Right ventricle myocardium inferior (tissue), 1 donor: ENCODE measurements at regions of chr9 and their contacts with region 1.

Region 1: GRCh38 chr9:12719431-12719830 is 26.2 kb downstream of the TYRP1 start:
- DNase-seq: no peak
- ATAC-seq: no peak

Region 2: DNA sequence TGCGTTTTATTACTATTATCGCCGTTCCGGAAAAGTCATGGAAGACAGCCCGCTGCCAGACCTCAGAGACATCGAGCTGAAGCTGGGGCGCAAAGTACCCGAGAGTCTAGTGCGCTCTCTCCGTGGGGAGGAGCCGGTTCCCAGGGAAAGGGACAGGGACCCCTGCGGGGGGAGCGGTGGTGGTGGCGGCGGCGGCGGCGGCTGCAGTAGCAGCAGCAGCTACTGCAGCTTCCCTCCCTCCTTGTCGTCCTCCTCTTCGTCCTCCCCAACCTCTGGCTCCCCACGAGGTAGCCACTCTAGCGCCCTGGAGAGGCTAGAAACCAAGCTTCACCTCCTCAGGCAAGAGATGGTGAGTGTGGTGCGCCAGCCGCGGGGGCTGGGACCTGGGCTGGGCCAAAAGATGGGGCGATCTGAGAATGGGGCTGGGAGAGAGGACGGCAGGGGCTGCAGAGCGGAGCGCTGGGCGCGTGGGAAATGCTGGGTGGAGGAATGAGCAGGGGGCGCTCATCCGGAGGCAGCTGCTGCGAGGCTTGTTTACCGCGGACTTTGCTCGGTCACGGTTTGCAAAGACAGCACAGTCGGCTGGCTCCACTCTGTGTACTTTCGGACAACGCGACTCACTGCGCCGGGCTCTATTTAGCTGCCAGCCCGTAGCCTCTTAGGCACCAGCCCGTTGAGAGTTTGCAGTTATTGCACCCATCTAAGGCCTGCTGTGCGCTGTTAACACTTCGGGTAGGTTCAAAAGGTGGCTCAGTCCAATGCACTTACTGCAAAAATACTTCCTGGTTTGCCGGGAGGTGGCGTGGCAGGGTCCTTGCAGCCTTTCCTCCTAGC is 56.5 kb after region 1 on chr9:
- intact Hi-C with region 1: loop called (anchors 5 kb)
- DNase-seq: peak; percentile 57
- ATAC-seq: peak; percentile 95

Region 3: GRCh38 chr9:12822111-12822510 is 102.7 kb after region 1 on chr9:
- intact Hi-C with region 1: loop called (anchors 2 kb)
- DNase-seq: no peak
- ATAC-seq: no peak

Region 4: GRCh38 chr9:12884737-12885414 is 165.4 kb after region 1 on chr9:
- intact Hi-C with region 1: loop called (anchors 1 kb)
- DNase-seq: no peak
- ATAC-seq: peak; percentile 61

Region 5: DNA sequence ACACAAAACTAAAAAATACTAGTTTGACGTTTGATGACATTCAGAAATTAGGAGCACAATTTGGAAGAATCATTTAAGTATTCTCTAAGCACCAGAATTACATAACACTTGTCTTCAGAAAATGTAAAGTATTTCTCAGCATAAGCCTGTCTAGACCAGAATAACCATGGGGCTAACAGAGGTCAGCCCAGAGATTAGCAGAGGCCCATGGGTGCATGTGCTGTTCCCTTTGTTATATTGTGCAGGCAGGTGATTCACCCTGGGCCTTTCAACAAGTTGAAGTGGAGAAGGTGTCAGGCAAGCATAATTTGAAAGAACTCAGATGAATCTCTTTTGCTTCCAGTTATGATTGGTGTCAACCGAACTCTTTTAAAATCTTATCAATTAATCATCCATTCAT is 283.3 kb after region 1 on chr9:
- intact Hi-C with region 1: loop called (anchors 10 kb)
- DNase-seq: no peak
- ATAC-seq: peak; percentile 60

Region 6: GRCh38 chr9:13088720-13089427 is 369.4 kb after region 1 on chr9:
- intact Hi-C with region 1: loop called (anchors 2 kb)
- DNase-seq: no peak
- ATAC-seq: peak; percentile 52